ENCODE measurements at regions of chr14 and their contacts with region 1.

Region 1: DNA sequence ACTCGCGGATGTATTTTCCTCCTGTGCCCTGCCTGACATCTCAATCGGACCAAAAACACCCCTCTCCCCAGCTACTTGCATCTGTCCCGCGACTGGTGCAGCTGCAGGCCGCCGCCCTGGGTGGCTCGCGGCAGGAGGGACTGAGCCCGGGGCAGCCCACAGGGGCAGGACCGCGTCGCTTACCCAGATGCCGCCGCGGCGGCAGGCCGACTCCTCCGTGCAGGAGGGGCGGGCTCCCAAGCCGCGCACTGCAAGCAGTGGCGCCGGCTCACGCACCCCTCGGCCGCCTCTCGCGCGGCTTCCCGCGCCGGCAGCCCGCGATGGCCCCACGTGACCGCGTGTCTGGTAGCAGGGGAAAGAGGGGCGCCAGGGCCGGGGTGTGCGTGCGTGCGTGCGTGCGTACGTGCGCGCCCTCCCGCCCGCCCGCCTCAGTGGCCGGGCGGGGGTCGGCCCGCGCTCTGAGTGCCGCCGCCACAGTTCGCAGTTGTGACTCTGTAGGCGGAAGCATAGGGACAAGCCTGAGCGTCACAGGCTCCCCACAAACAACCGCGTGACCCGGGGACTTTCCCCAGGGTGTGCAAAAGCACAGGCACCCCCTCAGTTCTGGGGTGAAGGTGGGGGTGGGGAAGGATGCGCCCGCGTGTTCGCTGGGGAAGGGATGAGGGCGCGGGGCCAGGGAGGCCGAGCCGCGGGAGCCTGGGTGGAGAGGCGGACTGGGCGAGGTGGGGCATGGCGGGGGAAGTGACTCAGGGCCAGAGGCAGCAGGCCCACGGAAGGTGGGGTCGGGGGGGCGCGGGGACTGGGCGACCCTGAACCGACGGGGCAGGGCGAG is at the start of gene ZBTB25:
- DNase-seq: peak; percentile 99
- ATAC-seq: peak; percentile 64
- H3K4me3 ChIP-seq: peak within 1 kb of the TSS; percentile 87 to 98 (median 95)
- H3K4me3 Mint-ChIP-seq: peak within 1 kb of the TSS; percentile 95
- H3K27ac ChIP-seq: peak within 1 kb of the TSS; percentile 99 to 100
- H3K27ac Mint-ChIP-seq: peak within 1 kb of the TSS; percentile 100
- H3K4me1 ChIP-seq: peaks cover 63 to 65% of the 10 kb centered on the region in 2 donors
- H3K4me1 Mint-ChIP-seq: peaks cover 61% of the 10 kb centered on the region
- H3K27me3 ChIP-seq: no peaks in the 10 kb centered on the region
- H3K27me3 Mint-ChIP-seq: no peaks in the 10 kb centered on the region
- CTCF ChIP-seq: no peak
- total RNA-seq, gene ZBTB25: 45.7 and 51.0 TPM in 2 replicates

Region 2: GRCh38 chr14:63745858-63746425 is 757.8 kb before region 1 on chr14:
- CTCF ChIA-PET with region 1: no interaction called
- POLR2A ChIA-PET with region 1: interaction called, 3 read pairs
- intact Hi-C with region 1: loop called (anchors 5 kb)
- DNase-seq: peak; percentile 87
- ATAC-seq: peak; percentile 75
- H3K4me3 ChIP-seq: peak overlapping the region in 2 of 5 experiments; percentile 1 to 41
- H3K4me3 Mint-ChIP-seq: peak overlapping the region; percentile 76
- H3K27ac ChIP-seq: peak overlapping the region; percentile 94 to 97
- H3K27ac Mint-ChIP-seq: peak overlapping the region; percentile 99
- H3K4me1 ChIP-seq: peaks cover 39 to 54% of the 10 kb centered on the region in 2 donors
- H3K4me1 Mint-ChIP-seq: peaks cover 40% of the 10 kb centered on the region
- H3K27me3 ChIP-seq: no peaks in the 10 kb centered on the region
- H3K27me3 Mint-ChIP-seq: no peaks in the 10 kb centered on the region
- CTCF ChIP-seq: no peak

Region 3: DNA sequence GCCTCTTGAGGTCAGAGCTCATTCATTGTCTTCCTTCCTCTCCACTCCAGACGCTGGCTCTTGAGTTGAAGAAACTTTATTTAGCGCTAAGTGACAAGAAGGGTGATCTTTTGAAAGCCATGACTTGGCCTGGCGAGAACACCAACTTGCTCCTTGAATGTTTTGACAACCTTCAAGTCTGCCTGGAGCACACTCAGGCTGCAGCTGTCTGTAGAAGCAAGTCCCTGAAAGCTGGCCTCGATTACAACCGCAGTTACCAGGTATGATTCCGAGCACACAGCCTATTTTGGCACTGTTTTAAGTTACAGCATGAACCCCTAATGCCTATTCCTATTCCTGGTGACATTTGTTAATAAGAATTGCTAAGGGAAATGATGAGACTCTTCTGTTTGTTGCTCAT is 377.1 kb before region 1 on chr14:
- CTCF ChIA-PET with region 1: no interaction called
- POLR2A ChIA-PET with region 1: no interaction called
- intact Hi-C with region 1: no loop called
- DNase-seq: no peak
- ATAC-seq: no peak
- H3K4me3 ChIP-seq: no peak overlapping the region
- H3K4me3 Mint-ChIP-seq: no peak overlapping the region
- H3K27ac ChIP-seq: no peak overlapping the region
- H3K27ac Mint-ChIP-seq: no peak overlapping the region
- H3K4me1 ChIP-seq: no peaks in the 10 kb centered on the region
- H3K4me1 Mint-ChIP-seq: no peaks in the 10 kb centered on the region
- H3K27me3 ChIP-seq: no peaks in the 10 kb centered on the region
- H3K27me3 Mint-ChIP-seq: no peaks in the 10 kb centered on the region
- CTCF ChIP-seq: no peak

Region 4: DNA sequence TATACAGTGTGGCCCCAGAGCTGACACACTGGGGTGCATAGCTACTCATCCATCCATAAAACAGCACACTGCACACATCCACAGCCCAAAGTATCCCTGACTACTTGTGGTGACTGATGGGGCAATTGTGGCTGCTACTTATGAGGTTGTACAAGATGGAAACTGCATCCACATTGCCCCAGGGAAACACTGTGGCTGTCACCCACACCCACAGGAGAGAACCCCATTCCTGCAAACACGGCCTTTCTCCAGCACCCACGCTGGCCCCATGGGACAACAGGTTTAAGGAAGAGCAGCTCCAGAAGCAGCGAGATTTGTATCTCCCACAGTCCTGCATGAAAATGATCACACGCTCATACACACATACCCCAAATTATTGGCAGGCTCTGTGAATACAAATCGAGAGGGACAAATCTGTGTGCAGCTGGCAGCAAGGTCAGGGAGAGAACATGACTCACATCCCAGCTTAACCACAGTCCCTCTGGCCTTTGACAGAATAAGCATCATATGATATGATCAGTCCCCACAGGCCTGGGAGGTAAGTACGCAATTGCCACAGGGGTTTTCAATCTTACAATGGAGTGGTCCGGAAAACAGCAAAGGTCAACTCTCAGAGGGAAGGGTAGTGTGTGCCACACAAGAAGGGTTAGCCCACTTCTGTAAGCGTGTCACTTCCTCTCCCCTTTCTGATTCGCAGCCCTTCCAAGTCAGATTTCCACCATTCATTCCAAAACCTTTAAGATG is 271.4 kb before region 1 on chr14:
- CTCF ChIA-PET with region 1: no interaction called
- POLR2A ChIA-PET with region 1: no interaction called
- intact Hi-C with region 1: loop called (anchors 2 kb)
- DNase-seq: peak; percentile 31
- ATAC-seq: peak; percentile 7
- H3K4me3 ChIP-seq: no peak overlapping the region
- H3K4me3 Mint-ChIP-seq: peak overlapping the region; percentile 73
- H3K27ac ChIP-seq: no peak overlapping the region
- H3K27ac Mint-ChIP-seq: peak overlapping the region; percentile 96
- H3K4me1 ChIP-seq: peaks cover 49 to 53% of the 10 kb centered on the region in 2 donors
- H3K4me1 Mint-ChIP-seq: peaks cover 56% of the 10 kb centered on the region
- H3K27me3 ChIP-seq: no peaks in the 10 kb centered on the region
- H3K27me3 Mint-ChIP-seq: no peaks in the 10 kb centered on the region
- CTCF ChIP-seq: no peak

Region 5: DNA sequence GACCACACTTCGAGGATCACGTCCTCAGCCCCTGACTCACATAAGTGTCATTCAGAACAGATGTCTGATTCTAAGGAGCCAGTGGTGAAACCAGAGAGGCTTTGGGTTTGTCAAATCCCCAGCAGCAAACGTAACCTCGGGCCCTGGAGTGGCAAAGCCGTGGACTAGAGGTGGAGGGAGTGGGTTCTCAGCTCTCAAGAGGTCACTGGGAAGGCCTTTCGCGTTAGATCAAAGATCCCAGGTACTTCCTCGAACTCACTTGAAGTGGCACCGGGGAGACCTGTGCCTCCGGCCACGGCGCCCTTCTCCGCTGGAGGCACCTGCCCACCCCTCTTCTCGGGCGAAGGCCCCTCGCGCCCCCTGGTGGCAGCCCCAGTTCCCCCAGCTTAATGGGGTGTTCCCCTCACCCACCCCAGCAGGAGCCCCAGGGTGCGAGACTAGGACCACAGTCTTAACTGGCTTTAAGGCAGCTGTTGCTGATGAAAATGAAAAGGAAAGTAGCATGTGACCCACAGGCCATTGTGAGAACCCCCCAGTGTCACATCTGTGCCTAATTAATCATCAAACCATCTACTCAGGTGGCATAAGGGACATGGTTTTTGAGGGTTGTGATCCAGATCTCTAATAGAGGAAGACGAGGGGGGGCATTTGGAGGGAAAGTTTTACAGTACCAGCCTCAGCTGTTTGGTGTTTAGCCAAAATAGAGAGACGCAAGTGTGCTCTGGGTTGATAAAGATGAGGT is 208.9 kb before region 1 on chr14:
- CTCF ChIA-PET with region 1: no interaction called
- POLR2A ChIA-PET with region 1: no interaction called
- intact Hi-C with region 1: no loop called
- DNase-seq: peak; percentile 93
- ATAC-seq: peak; percentile 90
- H3K4me3 ChIP-seq: peak overlapping the region; percentile 56 to 90 (median 61)
- H3K4me3 Mint-ChIP-seq: peak overlapping the region; percentile 95
- H3K27ac ChIP-seq: peak overlapping the region; percentile 26 to 67
- H3K27ac Mint-ChIP-seq: peak overlapping the region; percentile 87
- H3K4me1 ChIP-seq: peaks cover 14 to 19% of the 10 kb centered on the region in 2 donors
- H3K4me1 Mint-ChIP-seq: peaks cover 30% of the 10 kb centered on the region
- H3K27me3 ChIP-seq: no peaks in the 10 kb centered on the region
- H3K27me3 Mint-ChIP-seq: no peaks in the 10 kb centered on the region
- CTCF ChIP-seq: peak; percentile 87

Region 6: GRCh38 chr14:64387694-64388532 is 115.8 kb before region 1 on chr14 and contains the start of gene MTHFD1:
- CTCF ChIA-PET with region 1: interaction called, 3 read pairs
- POLR2A ChIA-PET with region 1: interaction called, 19 read pairs
- intact Hi-C with region 1: loop called (anchors 1 kb)
- DNase-seq: peak; percentile 98
- ATAC-seq: peak; percentile 75
- H3K4me3 ChIP-seq: peak within 1 kb of the TSS; percentile 68 to 93 (median 84)
- H3K4me3 Mint-ChIP-seq: peak within 1 kb of the TSS; percentile 93
- H3K27ac ChIP-seq: peak within 1 kb of the TSS; percentile 75 to 80
- H3K27ac Mint-ChIP-seq: peak within 1 kb of the TSS; percentile 95
- H3K4me1 ChIP-seq: peaks cover 27 to 34% of the 10 kb centered on the region in 2 donors
- H3K4me1 Mint-ChIP-seq: peaks cover 42% of the 10 kb centered on the region
- H3K27me3 ChIP-seq: no peaks in the 10 kb centered on the region
- H3K27me3 Mint-ChIP-seq: no peaks in the 10 kb centered on the region
- CTCF ChIP-seq: no peak
- total RNA-seq, gene MTHFD1: 47.1 and 51.3 TPM in 2 replicates

Region 7: GRCh38 chr14:64465191-64465822 is 38.4 kb before region 1 on chr14 and contains the start of gene AKAP5:
- CTCF ChIA-PET with region 1: interaction called, 5 read pairs
- POLR2A ChIA-PET with region 1: interaction called, 6 read pairs
- intact Hi-C with region 1: loop called (anchors 2 kb)
- DNase-seq: peak; percentile 81
- ATAC-seq: peak; percentile 84
- H3K4me3 ChIP-seq: peak within 1 kb of the TSS; percentile 53 to 80 (median 68)
- H3K4me3 Mint-ChIP-seq: peak within 1 kb of the TSS; percentile 88
- H3K27ac ChIP-seq: peak within 1 kb of the TSS; percentile 36 to 61
- H3K27ac Mint-ChIP-seq: peak within 1 kb of the TSS; percentile 82
- H3K4me1 ChIP-seq: peaks cover 36 to 38% of the 10 kb centered on the region in 2 donors
- H3K4me1 Mint-ChIP-seq: peaks cover 57% of the 10 kb centered on the region
- H3K27me3 ChIP-seq: no peaks in the 10 kb centered on the region
- H3K27me3 Mint-ChIP-seq: no peaks in the 10 kb centered on the region
- CTCF ChIP-seq: no peak
- total RNA-seq, gene AKAP5: 1.4 and 1.7 TPM in 2 replicates

Region 8: GRCh38 chr14:64540208-64541157 is 36.8 kb after region 1 on chr14 and contains the start of gene HSPA2:
- CTCF ChIA-PET with region 1: interaction called, 4 read pairs
- POLR2A ChIA-PET with region 1: interaction called, 28 read pairs
- intact Hi-C with region 1: loop called (anchors 1 kb)
- DNase-seq: peak; percentile 98
- ATAC-seq: peak; percentile 90
- H3K4me3 ChIP-seq: peak within 1 kb of the TSS; percentile 74 to 98 (median 85)
- H3K4me3 Mint-ChIP-seq: peak within 1 kb of the TSS; percentile 100
- H3K27ac ChIP-seq: peak within 1 kb of the TSS; percentile 60 to 67
- H3K27ac Mint-ChIP-seq: peak within 1 kb of the TSS; percentile 97
- H3K4me1 ChIP-seq: peaks cover 26 to 32% of the 10 kb centered on the region in 2 donors
- H3K4me1 Mint-ChIP-seq: peaks cover 31% of the 10 kb centered on the region
- H3K27me3 ChIP-seq: peaks cover 0 to 19% (median 5%) of the 10 kb centered on the region in 4 experiments
- H3K27me3 Mint-ChIP-seq: peaks cover 5% of the 10 kb centered on the region
- CTCF ChIP-seq: peak; percentile 78
- total RNA-seq, gene HSPA2: 14.9 and 19.6 TPM in 2 replicates

Region 9: DNA sequence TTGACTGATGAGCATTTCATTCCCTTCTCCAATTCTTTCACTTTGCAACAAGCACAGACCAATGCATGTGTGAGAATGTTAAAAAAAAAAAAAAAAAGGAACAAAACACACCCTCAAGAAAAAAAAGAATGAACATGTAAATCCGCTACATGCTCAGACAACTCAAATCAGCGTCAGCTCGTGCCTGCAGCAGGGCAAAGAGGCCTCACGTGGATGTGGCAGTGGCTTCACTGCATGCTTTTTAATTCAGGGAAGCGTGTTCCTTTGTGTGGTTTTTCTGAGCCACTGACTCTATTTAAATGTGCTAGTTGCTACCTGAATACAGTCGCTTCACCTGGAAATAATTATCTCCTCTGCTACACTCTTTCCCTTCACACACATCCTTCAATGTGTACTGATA is 101.2 kb after region 1 on chr14:
- CTCF ChIA-PET with region 1: no interaction called
- POLR2A ChIA-PET with region 1: no interaction called
- intact Hi-C with region 1: no loop called
- DNase-seq: no peak
- ATAC-seq: no peak
- H3K4me3 ChIP-seq: no peak overlapping the region
- H3K4me3 Mint-ChIP-seq: no peak overlapping the region
- H3K27ac ChIP-seq: no peak overlapping the region
- H3K27ac Mint-ChIP-seq: no peak overlapping the region
- H3K4me1 ChIP-seq: no peaks in the 10 kb centered on the region
- H3K4me1 Mint-ChIP-seq: no peaks in the 10 kb centered on the region
- H3K27me3 ChIP-seq: peaks cover 0 to 4% (median 0%) of the 10 kb centered on the region in 4 experiments
- H3K27me3 Mint-ChIP-seq: peaks cover 28% of the 10 kb centered on the region
- CTCF ChIP-seq: no peak

Region 10: GRCh38 chr14:64914237-64914971 is 410.7 kb after region 1 on chr14 and contains the start of gene CHURC1:
- CTCF ChIA-PET with region 1: no interaction called
- POLR2A ChIA-PET with region 1: no interaction called
- intact Hi-C with region 1: loop called (anchors 1 kb)
- DNase-seq: peak; percentile 98
- ATAC-seq: peak; percentile 97
- H3K4me3 ChIP-seq: peak within 1 kb of the TSS; percentile 88 to 100 (median 96)
- H3K4me3 Mint-ChIP-seq: peak within 1 kb of the TSS; percentile 85
- H3K27ac ChIP-seq: peak within 1 kb of the TSS; percentile 98 to 99
- H3K27ac Mint-ChIP-seq: peak within 1 kb of the TSS; percentile 96
- H3K4me1 ChIP-seq: peaks cover 17 to 24% of the 10 kb centered on the region in 2 donors
- H3K4me1 Mint-ChIP-seq: peaks cover 40% of the 10 kb centered on the region
- H3K27me3 ChIP-seq: peaks cover 0 to 4% (median 0%) of the 10 kb centered on the region in 4 experiments
- H3K27me3 Mint-ChIP-seq: peaks cover 13% of the 10 kb centered on the region
- CTCF ChIP-seq: no peak
- total RNA-seq, gene CHURC1: 67.7 and 77.1 TPM in 2 replicates